Heart right ventricle (tissue), 16 donors: ENCODE measurements at regions of chr1 and their contacts with region 1.

Region 1: DNA sequence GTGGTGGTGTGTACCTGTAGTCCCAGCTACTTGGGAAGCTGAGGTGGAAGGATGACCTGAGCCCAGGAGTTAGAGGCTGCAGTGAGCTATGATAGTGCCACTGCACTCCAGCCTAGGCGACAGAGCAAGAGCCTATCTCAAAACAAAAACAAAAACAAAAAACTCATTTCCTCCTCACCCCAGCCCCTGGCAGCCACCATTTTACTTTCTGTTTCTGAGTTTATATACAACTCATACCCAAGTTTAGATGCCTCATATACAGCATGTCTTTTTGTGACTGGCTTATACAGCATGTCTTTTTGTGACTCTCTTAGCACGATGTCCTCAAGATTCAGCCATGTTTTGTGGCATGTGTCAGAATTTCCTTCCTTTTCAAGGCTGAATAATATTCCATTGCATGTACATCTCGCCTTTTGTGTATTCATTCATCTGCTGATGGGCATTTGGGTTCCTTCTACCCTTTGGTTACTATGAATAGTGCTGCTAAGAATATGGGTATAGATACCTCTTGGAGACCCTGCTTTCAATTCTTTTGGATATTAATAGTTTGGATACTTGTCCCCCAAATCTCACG is 14.7 kb downstream of the COA7 start:
- DNase-seq: no peak
- ATAC-seq: no peak
- H3K4me3 ChIP-seq: no peak overlapping the region
- H3K27ac ChIP-seq: no peak overlapping the region
- H3K4me1 ChIP-seq: peaks cover 0 to 8% (median 0%) of the 10 kb centered on the region in 9 donors
- H3K27me3 ChIP-seq: no peaks in the 10 kb centered on the region
- CTCF ChIP-seq: no peak

Region 2: DNA sequence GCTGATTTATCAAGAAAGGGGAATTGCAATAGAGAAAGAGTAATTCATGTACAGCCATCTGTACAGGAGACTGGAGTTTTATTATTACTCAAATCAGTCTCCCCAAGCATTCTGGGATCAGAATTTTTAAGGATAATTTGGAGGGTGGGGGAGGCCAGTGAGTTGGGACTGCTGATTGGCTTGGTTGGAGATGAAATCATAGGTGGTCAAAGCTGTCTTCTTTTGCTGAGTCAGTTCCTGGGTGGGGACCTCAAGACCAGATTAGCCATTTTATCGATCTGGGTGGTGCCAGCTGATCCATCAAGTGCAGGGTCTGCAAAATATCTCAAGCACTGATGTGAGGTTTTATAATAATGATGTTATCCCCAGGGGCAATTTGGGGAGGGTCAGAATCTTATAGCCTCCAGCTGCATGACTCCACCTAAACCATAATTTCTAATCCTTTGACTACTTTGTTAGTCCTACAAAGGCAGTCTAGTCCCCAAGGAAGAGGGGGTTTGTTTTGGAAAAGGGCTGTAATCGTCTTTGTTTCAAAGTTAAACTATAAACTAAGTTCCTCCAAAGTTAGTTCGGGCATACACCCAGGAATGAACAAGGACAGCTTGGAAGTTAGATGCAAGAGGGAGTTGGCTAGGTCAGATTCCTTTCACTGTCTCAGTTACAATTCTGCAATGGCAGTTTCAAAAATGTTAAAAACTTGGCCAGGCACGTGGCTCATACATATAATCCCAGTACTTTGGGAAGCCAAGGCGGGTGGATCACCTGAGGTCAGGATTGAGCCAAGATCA is 676.0 kb before region 1 on chr1:
- intact Hi-C with region 1: no loop called
- DNase-seq: no peak
- ATAC-seq: no peak
- H3K4me3 ChIP-seq: no peak overlapping the region
- H3K27ac ChIP-seq: no peak overlapping the region
- H3K4me1 ChIP-seq: no peaks in the 10 kb centered on the region
- H3K27me3 ChIP-seq: peaks cover 0 to 73% (median 48%) of the 10 kb centered on the region in 7 donors
- CTCF ChIP-seq: no peak

Region 3: GRCh38 chr1:52127181-52128180 is 556.0 kb before region 1 on chr1:
- intact Hi-C with region 1: loop called in 4 of 10 experiments (anchors 5 to 10 kb)
- DNase-seq: peak in 1 of 2 donors; percentile 36
- ATAC-seq: peak in 6 of 8 donors; percentile 11 to 61 (median 37)
- H3K4me3 ChIP-seq: no peak overlapping the region
- H3K27ac ChIP-seq: no peak overlapping the region
- H3K4me1 ChIP-seq: peaks cover 0 to 5% (median 0%) of the 10 kb centered on the region in 9 donors
- H3K27me3 ChIP-seq: peaks cover 0 to 24% (median 0%) of the 10 kb centered on the region in 7 donors
- CTCF ChIP-seq: peak; percentile 35 to 83 (median 74)

Region 4: GRCh38 chr1:52365746-52366516 is 317.5 kb before region 1 on chr1 and contains the start of gene CC2D1B:
- intact Hi-C with region 1: loop called in 2 of 10 experiments (anchors 5 to 10 kb)
- DNase-seq: peak; percentile 97 to 99
- ATAC-seq: peak; percentile 95 to 98 (median 97)
- H3K4me3 ChIP-seq: peak within 1 kb of the TSS; percentile 48 to 98 (median 85)
- H3K27ac ChIP-seq: peak within 1 kb of the TSS; percentile 46 to 99 (median 90)
- H3K4me1 ChIP-seq: peaks cover 0 to 26% (median 12%) of the 10 kb centered on the region in 9 donors
- H3K27me3 ChIP-seq: peaks cover 0 to 10% (median 0%) of the 10 kb centered on the region in 7 donors
- CTCF ChIP-seq: peak in 5 of 9 donors; percentile 22 to 48 (median 29)
- total RNA-seq, gene CC2D1B: 14.4 to 19.9 (median 17.2) TPM

Region 5: DNA sequence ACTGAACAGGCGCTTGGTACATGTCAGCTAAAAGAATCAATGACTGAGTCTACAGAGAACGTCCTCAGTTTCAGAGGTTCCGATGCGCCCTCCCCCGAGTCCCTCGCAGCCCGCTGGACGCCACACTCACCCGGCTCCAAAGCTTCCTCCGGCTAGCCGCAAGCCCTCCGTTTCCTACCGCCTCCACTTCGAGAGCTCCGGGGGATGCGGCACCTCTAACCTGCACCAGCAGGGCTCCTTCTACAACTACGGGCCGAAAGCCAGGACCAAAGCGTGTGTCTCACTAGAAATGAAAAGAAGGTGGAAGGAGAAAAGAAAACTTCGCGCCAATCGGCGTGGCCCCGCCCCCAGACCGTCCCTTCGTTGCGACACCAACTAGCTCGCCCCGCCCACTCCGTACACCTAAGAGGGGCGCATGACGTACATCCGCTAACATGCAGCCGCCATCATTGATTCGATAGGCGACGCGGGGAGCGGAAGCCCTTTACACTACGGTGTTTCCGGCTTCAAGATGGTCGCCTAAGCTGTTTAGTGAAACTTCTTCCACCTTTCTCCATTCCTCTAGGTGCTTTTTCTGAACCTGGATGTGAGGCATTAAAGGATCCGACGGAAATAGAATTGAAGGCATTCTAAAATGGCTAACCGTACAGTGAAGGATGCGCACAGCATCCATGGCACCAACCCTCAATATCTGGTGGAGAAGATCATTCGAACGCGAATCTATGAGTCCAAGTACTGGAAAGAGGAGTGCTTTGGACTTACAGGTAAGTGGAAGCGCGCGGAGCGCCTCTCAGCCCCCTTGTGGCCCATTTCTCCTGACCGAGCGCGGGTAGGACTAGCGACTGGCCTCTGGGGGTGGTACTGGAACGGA is 279.1 kb before region 1 on chr1 and contains the starts of genes ORC1 and PRPF38A:
- intact Hi-C with region 1: loop called in 1 of 10 experiments (anchors 10 kb)
- DNase-seq: peak; percentile 95 to 98
- ATAC-seq: peak; percentile 99 to 100 (median 100)
- H3K4me3 ChIP-seq: peak within 1 kb of the TSS; percentile 64 to 95 (median 86)
- H3K27ac ChIP-seq: peak within 1 kb of the TSS; percentile 5 to 93 (median 88)
- H3K4me1 ChIP-seq: peaks cover 7 to 34% (median 21%) of the 10 kb centered on the region in 9 donors
- H3K27me3 ChIP-seq: no peaks in the 10 kb centered on the region
- CTCF ChIP-seq: peak in 7 of 9 donors; percentile 19 to 62 (median 52)
- total RNA-seq, gene ORC1: 0.08 to 0.90 (median 0.20) TPM in 8 of 10 donors, not detected in the others
- total RNA-seq, gene PRPF38A: 16.7 to 20.8 (median 18.8) TPM

Region 6: GRCh38 chr1:52413410-52413989 is 270.0 kb before region 1 on chr1:
- intact Hi-C with region 1: loop called in 2 of 10 experiments (anchors 10 kb)
- DNase-seq: no peak
- ATAC-seq: no peak
- H3K4me3 ChIP-seq: no peak overlapping the region
- H3K27ac ChIP-seq: no peak overlapping the region
- H3K4me1 ChIP-seq: no peaks in the 10 kb centered on the region
- H3K27me3 ChIP-seq: no peaks in the 10 kb centered on the region
- CTCF ChIP-seq: no peak

Region 7: DNA sequence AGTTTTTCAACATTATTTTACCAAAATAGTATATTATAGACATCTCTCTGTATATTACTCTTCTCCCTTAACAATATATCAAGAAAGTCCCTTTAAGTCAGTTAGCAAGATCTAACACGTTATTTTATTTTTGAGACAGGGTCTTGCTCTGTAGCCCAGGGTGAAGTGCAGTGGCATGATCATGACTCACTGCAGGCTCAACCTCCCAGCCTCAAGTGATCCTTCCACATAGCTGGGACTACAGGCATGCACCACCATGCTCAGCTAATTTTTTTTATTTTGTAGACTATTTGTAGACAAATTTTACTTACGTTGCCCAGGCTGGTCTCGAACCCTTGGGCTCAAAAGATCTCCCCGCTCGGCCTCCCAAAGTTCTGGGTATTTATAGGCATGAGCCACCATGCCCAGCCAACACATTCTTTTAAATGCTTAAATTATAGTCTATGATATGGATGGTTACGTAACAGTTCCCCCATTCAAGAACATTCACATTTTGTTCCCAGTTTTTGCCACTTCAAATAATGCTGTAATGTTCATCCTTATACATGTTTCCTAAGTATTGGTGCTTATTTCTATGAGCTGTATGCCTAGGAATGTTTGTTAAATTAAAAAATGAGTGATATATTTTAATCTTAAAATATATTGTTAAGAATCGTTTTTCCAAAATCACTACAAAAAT is 201.0 kb before region 1 on chr1:
- intact Hi-C with region 1: loop called in 1 of 10 experiments (anchors 10 kb)
- DNase-seq: no peak
- ATAC-seq: no peak
- H3K4me3 ChIP-seq: no peak overlapping the region
- H3K27ac ChIP-seq: no peak overlapping the region
- H3K4me1 ChIP-seq: no peaks in the 10 kb centered on the region
- H3K27me3 ChIP-seq: no peaks in the 10 kb centered on the region
- CTCF ChIP-seq: no peak

Region 8: GRCh38 chr1:52552505-52553361 is 130.7 kb before region 1 on chr1 and contains the start of gene TUT4:
- intact Hi-C with region 1: loop called in 2 of 10 experiments (anchors 5 to 10 kb)
- DNase-seq: peak; percentile 81 to 86
- ATAC-seq: peak; percentile 88 to 96 (median 92)
- H3K4me3 ChIP-seq: peak within 1 kb of the TSS; percentile 87 to 99 (median 96)
- H3K27ac ChIP-seq: peak within 1 kb of the TSS; percentile 67 to 94 (median 89)
- H3K4me1 ChIP-seq: peaks cover 0 to 37% (median 27%) of the 10 kb centered on the region in 9 donors
- H3K27me3 ChIP-seq: no peaks in the 10 kb centered on the region
- CTCF ChIP-seq: peak in 3 of 9 donors; percentile 21 to 24 (median 23)
- total RNA-seq, gene TUT4: 25.5 to 40.6 (median 32.5) TPM

Region 9: DNA sequence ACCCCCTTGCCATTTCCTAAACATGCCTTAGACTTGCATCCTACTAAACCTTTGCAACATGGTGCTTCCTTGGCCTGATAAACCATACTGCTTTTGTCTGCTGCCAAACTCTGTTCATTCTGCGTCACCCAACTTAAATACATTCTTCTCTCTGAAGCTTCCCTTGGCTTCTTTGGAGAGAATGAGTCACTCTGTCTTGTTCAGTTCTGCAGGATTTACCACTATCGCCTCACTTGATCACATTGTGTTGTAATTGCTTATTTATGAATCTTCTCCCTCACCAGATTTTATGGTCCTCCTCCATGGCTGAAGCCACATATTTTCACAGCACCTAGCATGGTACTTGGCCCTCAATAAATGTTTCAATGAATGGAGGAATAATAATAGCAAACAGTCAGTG is 108.9 kb before region 1 on chr1:
- intact Hi-C with region 1: no loop called
- DNase-seq: no peak
- ATAC-seq: no peak
- H3K4me3 ChIP-seq: no peak overlapping the region
- H3K27ac ChIP-seq: no peak overlapping the region
- H3K4me1 ChIP-seq: peaks cover 0 to 9% (median 0%) of the 10 kb centered on the region in 9 donors
- H3K27me3 ChIP-seq: no peaks in the 10 kb centered on the region
- CTCF ChIP-seq: no peak